ENCODE measurements at regions of chr22 and their contacts with region 1.

Region 1: GRCh38 chr22:47552541-47553205 is 790.2 kb downstream of the TBC1D22A start:
- DNase-seq: no peak
- H3K4me3 ChIP-seq: no peak overlapping the region
- H3K27ac ChIP-seq: no peak overlapping the region
- H3K4me1 ChIP-seq: no peaks in the 10 kb centered on the region
- H3K27me3 ChIP-seq: no peaks in the 10 kb centered on the region
- CTCF ChIP-seq: no peak
- EP300 ChIP-seq: no peak
- POLR2A ChIP-seq: no peak

Region 2: DNA sequence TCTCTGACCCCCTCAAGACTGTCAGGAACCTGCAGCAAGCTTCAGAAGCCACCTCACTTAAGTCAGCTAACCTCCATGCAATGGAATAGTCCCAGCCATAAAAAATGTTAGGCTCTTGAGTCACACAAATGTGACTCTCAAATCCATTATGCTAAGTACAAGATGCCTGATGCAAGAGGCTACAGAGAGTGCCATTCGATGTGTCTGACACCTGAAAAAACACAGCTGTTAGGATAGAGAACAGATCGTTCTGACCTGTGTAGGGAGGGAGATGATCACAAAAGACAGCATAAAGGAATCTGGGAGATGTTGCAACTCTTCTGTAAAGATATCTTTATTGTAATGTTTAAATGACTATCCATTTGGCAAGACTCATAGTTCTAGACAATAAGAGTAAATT is 77.8 kb before region 1 on chr22:
- intact Hi-C with region 1: loop called in 1 of 4 experiments (anchors 2 kb)
- DNase-seq: no peak
- H3K4me3 ChIP-seq: no peak overlapping the region
- H3K27ac ChIP-seq: no peak overlapping the region
- H3K4me1 ChIP-seq: peaks cover 5% of the 10 kb centered on the region
- H3K27me3 ChIP-seq: no peaks in the 10 kb centered on the region
- CTCF ChIP-seq: no peak
- EP300 ChIP-seq: no peak
- POLR2A ChIP-seq: no peak